ENCODE measurements at regions of chr10 and their contacts with region 1.

Region 1: DNA sequence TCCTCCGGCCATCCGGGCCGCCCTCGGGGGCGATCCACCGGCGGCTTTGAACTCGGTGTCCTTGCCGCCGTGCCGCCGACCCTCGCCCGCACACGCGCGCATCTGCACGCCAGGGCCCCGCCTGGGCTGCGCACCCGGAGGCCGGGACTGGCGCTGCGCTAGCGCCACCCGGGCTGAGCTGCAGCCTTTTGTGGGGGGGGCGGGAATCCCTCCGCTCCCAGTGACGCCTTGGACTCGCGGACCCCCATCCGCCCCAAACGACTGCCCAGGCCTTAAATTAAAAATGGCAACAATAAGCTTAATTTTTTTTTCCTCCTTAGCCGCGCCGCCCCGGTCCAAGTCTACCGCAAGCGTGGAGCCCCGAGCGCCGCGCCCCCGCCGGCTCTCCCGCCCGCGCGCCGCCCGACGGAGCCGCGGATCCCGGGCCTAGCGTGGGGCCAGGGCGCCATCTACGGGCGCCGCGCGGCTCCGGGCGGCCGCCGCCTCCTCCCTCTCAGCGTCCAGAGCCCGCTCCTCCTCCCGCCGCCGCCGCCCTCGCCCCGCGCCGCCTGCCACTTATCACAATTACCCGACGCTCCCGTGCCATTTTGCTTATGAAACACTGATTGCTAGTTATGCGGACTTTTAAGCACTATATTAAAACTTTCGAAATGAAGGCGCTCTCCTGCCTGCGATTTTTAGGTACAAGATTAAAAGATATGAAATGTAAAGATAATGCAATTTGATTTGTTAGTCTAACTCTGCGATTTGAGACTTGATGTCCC is 7.5 kb upstream of the EBF3 start:
- DNase-seq: peak in 3 of 5 donors; percentile 53 to 79 (median 67)
- ATAC-seq: peak; percentile 34 to 94 (median 88)
- H3K4me3 ChIP-seq: peak overlapping the region; percentile 29 to 64 (median 50)
- H3K27ac ChIP-seq: no peak overlapping the region
- H3K4me1 ChIP-seq: peaks cover 6 to 58% (median 27%) of the 10 kb centered on the region in 12 donors
- H3K27me3 ChIP-seq: peaks cover 31 to 88% (median 66%) of the 10 kb centered on the region in 9 donors
- CTCF ChIP-seq: peak in 10 of 12 donors; percentile 55 to 84 (median 67)
- POLR2A ChIP-seq: no peak

Region 2: GRCh38 chr10:128263891-128264688 is 1707.5 kb before region 1 on chr10:
- intact Hi-C with region 1: loop called in 6 of 10 experiments (anchors 5 to 10 kb)
- DNase-seq: peak; percentile 39 to 79 (median 44)
- ATAC-seq: peak in 3 of 4 donors; percentile 31 to 64 (median 60)
- H3K4me3 ChIP-seq: no peak overlapping the region
- H3K27ac ChIP-seq: no peak overlapping the region
- H3K4me1 ChIP-seq: no peaks in the 10 kb centered on the region
- H3K27me3 ChIP-seq: peaks cover 7 to 75% (median 31%) of the 10 kb centered on the region in 9 donors
- CTCF ChIP-seq: peak; percentile 44 to 76 (median 59)
- POLR2A ChIP-seq: no peak

Region 3: DNA sequence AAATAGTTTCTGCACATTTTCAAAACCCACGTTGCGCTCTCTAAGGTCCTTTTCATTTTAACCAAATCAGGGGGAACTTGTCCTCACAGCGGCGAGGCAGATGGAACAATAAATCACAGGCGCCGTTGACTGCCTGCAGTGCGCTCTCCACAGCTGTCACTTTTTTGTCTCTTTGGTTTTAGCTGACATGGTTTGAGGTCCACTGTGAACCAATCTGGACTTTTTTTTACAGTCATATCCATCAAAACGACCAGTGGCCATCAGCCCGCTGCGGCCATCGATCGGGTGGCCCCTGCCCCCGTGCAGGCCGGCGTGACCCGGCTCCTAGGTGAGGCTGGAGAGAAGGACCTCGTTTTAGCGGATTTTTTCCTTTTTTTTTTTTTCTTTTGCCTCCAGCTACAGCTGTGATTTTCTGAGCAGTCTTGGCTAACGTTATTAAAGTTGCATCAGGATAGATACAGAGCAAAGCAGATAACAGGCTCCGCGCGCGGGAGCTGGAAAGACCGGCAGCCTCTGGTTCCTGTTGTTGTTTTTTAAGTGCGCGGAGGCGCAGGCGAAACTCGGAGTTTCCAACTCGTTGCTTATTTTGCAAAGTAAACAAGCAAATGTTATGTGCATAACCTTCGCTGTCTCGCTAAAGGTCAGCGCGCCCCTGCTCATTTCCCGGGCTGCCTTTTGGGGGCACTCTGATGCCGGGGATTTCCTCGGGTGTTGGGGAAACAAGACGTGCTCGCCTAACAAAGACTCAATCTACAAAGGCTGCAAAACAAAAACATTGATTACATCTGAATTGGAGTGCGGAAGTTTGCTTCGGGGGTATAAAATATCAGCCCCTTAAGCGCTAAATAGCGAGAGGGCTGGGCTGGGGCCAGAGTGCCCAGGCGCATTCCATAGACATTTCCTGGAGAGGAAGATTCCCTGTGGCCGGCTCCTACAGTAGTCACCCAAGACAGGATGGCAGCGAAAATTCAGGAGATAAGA is 1430.5 kb before region 1 on chr10:
- intact Hi-C with region 1: loop called in 2 of 10 experiments (anchors 5 to 10 kb)
- DNase-seq: peak in 2 of 5 donors; percentile 10 to 42
- ATAC-seq: peak in 3 of 4 donors; percentile 26 to 63 (median 54)
- H3K4me3 ChIP-seq: peak overlapping the region in 10 of 12 donors; percentile 7 to 46 (median 36)
- H3K27ac ChIP-seq: peak overlapping the region in 5 of 12 donors; percentile 26 to 79 (median 61)
- H3K4me1 ChIP-seq: peaks cover 0 to 17% (median under 1%) of the 10 kb centered on the region in 12 donors
- H3K27me3 ChIP-seq: peaks cover 0 to 59% (median 14%) of the 10 kb centered on the region in 9 donors
- CTCF ChIP-seq: peak in 8 of 12 donors; percentile 10 to 51 (median 31)
- POLR2A ChIP-seq: no peak

Region 4: GRCh38 chr10:129274748-129275474 is 696.7 kb before region 1 on chr10:
- intact Hi-C with region 1: loop called in 1 of 10 experiments (anchors 10 kb)
- DNase-seq: no peak
- ATAC-seq: no peak
- H3K4me3 ChIP-seq: no peak overlapping the region
- H3K27ac ChIP-seq: no peak overlapping the region
- H3K4me1 ChIP-seq: peaks cover 0 to 14% (median 0%) of the 10 kb centered on the region in 12 donors
- H3K27me3 ChIP-seq: no peaks in the 10 kb centered on the region
- CTCF ChIP-seq: no peak
- POLR2A ChIP-seq: no peak

Region 5: GRCh38 chr10:129381741-129382140 is 589.8 kb before region 1 on chr10:
- intact Hi-C with region 1: no loop called
- DNase-seq: no peak
- ATAC-seq: no peak
- H3K4me3 ChIP-seq: no peak overlapping the region
- H3K27ac ChIP-seq: no peak overlapping the region
- H3K4me1 ChIP-seq: no peaks in the 10 kb centered on the region
- H3K27me3 ChIP-seq: no peaks in the 10 kb centered on the region
- CTCF ChIP-seq: no peak
- POLR2A ChIP-seq: no peak

Region 6: GRCh38 chr10:129501652-129502436 is 469.7 kb before region 1 on chr10:
- intact Hi-C with region 1: no loop called
- DNase-seq: no peak
- ATAC-seq: no peak
- H3K4me3 ChIP-seq: no peak overlapping the region
- H3K27ac ChIP-seq: no peak overlapping the region
- H3K4me1 ChIP-seq: no peaks in the 10 kb centered on the region
- H3K27me3 ChIP-seq: no peaks in the 10 kb centered on the region
- CTCF ChIP-seq: no peak
- POLR2A ChIP-seq: no peak

Region 7: GRCh38 chr10:130127364-130128061 is 155.9 kb after region 1 on chr10:
- intact Hi-C with region 1: loop called in 1 of 10 experiments (anchors 5 kb)
- DNase-seq: peak in 2 of 5 donors; percentile 32 to 36
- ATAC-seq: peak in 3 of 4 donors; percentile 66 to 80 (median 77)
- H3K4me3 ChIP-seq: no peak overlapping the region
- H3K27ac ChIP-seq: no peak overlapping the region
- H3K4me1 ChIP-seq: peaks cover 0 to 6% (median 0%) of the 10 kb centered on the region in 12 donors
- H3K27me3 ChIP-seq: peaks cover 0 to 13% (median 5%) of the 10 kb centered on the region in 9 donors
- CTCF ChIP-seq: peak; percentile 52 to 83 (median 72)
- POLR2A ChIP-seq: no peak